HEK293T (cell line): ENCODE measurements at regions of chr20 and their contacts with region 1.

Region 1: GRCh38 chr20:9078826-9079731 is 10.2 kb downstream of the PLCB4 start:
- DNase-seq: no peak

Region 2: GRCh38 chr20:8805737-8806442 is 273.2 kb before region 1 on chr20:
- CTCF ChIA-PET with region 1: interaction called, 11 read pairs
- POLR2A ChIA-PET with region 1: no interaction called
- DNase-seq: no peak

Region 3: GRCh38 chr20:9286501-9287461 is 207.7 kb after region 1 on chr20:
- CTCF ChIA-PET with region 1: no interaction called
- POLR2A ChIA-PET with region 1: no interaction called
- DNase-seq: no peak